B cell (primary cell): ENCODE measurements at regions of chr16 and their contacts with region 1.

Region 1: DNA sequence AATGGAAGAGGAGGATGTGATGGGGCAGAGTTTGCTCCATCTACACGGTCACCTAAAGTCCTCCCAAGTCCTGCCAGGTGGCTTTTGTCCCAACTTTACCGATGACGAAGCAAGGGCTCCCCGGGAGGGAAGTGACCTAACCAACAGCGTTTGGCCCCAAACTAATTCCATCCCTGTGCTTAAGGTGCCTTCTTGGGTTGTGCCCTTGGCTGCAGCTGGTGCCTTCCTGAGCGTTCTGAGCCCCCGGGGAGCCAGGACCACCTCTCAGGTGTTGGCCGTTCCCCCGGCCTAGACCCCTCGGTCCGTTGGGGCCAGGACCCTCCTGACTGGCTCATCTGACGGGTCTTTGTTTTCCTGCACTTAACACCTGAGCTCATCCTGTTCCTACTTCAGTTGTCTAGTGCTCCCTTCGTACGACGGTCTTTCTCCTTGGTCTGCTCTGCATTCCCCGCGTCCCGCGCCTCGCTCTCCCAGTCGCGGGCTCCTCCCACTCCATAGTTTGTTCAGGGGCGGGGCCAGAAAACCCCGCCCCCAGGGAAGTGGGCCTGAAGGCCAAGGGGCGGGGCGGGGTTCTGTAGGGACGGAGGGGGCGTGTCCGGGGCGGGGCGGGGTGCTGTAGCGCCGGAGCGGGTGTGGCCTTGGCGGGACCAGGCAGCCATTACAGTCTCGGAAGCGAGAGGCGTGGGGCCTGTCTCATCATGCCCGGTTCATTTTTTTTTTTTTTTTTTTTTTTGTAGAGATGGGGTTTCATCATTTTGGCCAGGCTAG is 822 bp upstream of the ZSCAN10 start:
- DNase-seq: peak; percentile 88
- ATAC-seq: peak; percentile 88
- H3K4me3 ChIP-seq: peak overlapping the region in 4 of 5 experiments; percentile 26 to 48 (median 36)
- H3K4me3 Mint-ChIP-seq: peak overlapping the region; percentile 83
- H3K27ac ChIP-seq: no peak overlapping the region
- H3K27ac Mint-ChIP-seq: peak overlapping the region; percentile 56
- H3K4me1 ChIP-seq: peaks cover 25 to 40% of the 10 kb centered on the region in 2 donors
- H3K4me1 Mint-ChIP-seq: peaks cover 32% of the 10 kb centered on the region
- H3K27me3 ChIP-seq: no peaks in the 10 kb centered on the region
- H3K27me3 Mint-ChIP-seq: no peaks in the 10 kb centered on the region
- CTCF ChIP-seq: no peak

Region 2: DNA sequence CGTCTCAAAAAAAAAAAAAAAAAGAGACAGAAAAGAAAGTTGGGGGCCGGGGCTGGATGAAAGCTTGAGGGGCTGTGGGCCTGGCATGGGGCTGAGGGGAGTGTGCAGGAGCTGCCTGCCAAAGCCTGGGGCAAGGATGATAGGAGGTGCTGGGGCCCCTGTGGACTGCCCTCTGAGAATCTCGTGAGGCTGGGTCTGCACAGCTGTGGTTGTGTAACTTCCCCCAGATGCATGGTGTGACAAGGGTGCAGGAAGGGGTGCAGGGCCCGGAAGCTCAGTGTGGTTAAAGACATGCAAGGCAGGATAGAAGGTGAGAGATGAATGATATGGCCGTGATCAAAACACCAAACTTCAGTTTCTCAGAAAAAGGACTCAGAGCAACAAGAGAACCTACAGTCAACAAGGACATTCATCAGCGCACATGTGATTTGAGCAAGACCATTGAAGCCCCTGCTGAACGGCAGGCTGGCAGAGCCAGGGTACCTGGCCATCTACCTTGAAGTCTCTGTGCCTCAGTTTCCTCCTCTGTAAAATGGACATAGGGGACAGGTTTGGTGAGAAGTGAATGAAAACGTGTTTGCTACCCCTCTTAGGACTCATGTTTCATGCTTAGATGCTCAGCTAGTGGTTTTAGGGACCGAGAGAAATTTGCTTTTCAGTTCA is 24.9 kb before region 1 on chr16:
- CTCF ChIA-PET with region 1: interaction called, 28 read pairs
- POLR2A ChIA-PET with region 1: no interaction called
- intact Hi-C with region 1: loop called (anchors 2 kb)
- DNase-seq: peak; percentile 65
- ATAC-seq: peak; percentile 88
- H3K4me3 ChIP-seq: peak overlapping the region in 4 of 5 experiments; percentile 2 to 29 (median 12)
- H3K4me3 Mint-ChIP-seq: peak overlapping the region; percentile 77
- H3K27ac ChIP-seq: peak overlapping the region; percentile 32 to 74
- H3K27ac Mint-ChIP-seq: peak overlapping the region; percentile 89
- H3K4me1 ChIP-seq: peaks cover 39 to 41% of the 10 kb centered on the region in 2 donors
- H3K4me1 Mint-ChIP-seq: peaks cover 55% of the 10 kb centered on the region
- H3K27me3 ChIP-seq: no peaks in the 10 kb centered on the region
- H3K27me3 Mint-ChIP-seq: no peaks in the 10 kb centered on the region
- CTCF ChIP-seq: no peak

Region 3: GRCh38 chr16:3212006-3212405 is 112.1 kb after region 1 on chr16:
- CTCF ChIA-PET with region 1: no interaction called
- POLR2A ChIA-PET with region 1: no interaction called
- intact Hi-C with region 1: no loop called
- DNase-seq: no peak
- ATAC-seq: no peak
- H3K4me3 ChIP-seq: no peak overlapping the region
- H3K4me3 Mint-ChIP-seq: no peak overlapping the region
- H3K27ac ChIP-seq: no peak overlapping the region
- H3K27ac Mint-ChIP-seq: no peak overlapping the region
- H3K4me1 ChIP-seq: peaks cover 14 to 16% of the 10 kb centered on the region in 2 donors
- H3K4me1 Mint-ChIP-seq: peaks cover 22% of the 10 kb centered on the region
- H3K27me3 ChIP-seq: peaks cover 0 to 9% (median 0%) of the 10 kb centered on the region in 4 experiments
- H3K27me3 Mint-ChIP-seq: peaks cover 22% of the 10 kb centered on the region
- CTCF ChIP-seq: no peak